ENCODE measurements at regions of chr6 and their contacts with region 1.

Region 1: GRCh38 chr6:1070085-1070521 is 241.8 kb upstream of the FOXQ1 start:
- DNase-seq: no peak
- H3K27ac ChIP-seq: no peak overlapping the region
- CTCF ChIP-seq: no peak

Region 2: DNA sequence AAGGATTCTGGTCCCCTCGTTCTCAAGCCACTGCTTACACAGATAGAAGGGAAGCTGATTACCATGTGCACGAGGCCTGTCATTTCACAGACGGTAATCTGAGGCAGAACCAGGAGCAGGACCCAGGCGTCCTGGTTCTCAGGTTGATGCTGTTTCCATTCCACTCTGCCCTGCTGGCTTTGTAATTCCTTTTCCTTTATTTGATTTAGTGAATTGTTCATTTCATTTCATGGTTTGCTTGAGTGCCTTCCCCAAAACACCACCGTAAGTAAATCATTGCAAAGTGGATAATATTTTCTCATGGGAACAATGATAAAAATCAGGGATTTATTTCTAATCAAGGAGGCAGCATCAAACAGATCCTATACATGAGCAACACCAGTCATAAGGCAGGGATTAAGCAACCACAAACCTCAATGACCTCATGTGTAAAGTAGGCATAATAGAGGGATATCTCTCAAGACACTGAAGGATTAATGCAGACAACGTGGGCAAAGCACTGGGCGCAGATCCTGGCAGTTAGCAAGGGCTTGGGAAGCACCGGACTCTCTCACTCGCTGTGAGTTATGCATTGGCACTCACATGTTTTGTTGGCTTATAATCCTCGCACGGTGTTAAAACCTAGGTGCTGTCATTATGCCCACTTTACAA is 12.3 kb after region 1 on chr6:
- CTCF ChIA-PET with region 1: no interaction called
- POLR2A ChIA-PET with region 1: interaction called, 11 read pairs
- DNase-seq: no peak
- H3K27ac ChIP-seq: peak overlapping the region; percentile 71
- CTCF ChIP-seq: no peak

Measured in RWPE1 (cell line).